ENCODE measurements at regions of chr1 and their contacts with region 1.

Region 1: DNA sequence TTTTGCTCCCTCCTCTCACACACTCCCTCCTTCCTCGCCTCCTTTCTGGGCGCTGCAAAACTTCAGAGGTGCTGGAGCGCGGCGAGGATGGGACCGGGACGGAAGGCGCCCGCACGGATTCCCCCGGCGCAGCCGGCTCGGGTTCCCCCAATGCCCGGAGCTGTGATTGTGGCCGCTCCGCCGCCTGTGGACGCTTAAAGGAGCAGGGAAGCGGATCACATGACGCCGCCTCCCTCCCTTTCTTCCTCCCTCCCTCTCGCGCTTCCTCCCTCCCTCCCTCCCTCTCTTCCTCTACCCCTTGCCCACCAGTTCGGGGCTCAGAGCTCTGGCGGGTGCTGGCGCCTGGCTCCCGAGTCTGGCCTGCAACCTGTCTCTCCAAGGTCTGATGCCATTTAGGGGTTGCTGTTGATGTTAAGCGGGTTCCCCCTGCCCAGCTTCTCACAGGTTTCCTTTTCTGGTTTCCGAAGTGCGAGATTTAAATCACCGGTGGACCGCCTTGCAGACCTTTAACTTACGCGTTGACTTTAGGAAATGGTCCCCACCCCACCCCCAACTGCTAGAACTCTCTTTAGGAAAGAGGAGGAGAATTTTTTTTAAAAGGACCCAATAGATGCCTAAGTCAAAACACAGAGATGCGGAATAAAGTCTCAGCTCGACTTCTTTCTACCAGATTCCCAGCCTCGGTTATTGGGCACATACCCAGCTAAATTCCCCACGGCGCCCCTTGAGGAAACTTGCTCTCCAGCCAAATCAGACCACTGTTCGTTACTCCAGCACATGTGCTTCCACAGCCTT is at the start of gene WLS:
- DNase-seq: peak; percentile 84
- ATAC-seq: peak; percentile 88
- H3K4me3 ChIP-seq: peak within 1 kb of the TSS; percentile 33
- H3K4me1 ChIP-seq: no peaks in the 10 kb centered on the region
- CTCF ChIP-seq: no peak
- total RNA-seq, gene WLS: 100 to 182 (median 118) TPM

Region 2: DNA sequence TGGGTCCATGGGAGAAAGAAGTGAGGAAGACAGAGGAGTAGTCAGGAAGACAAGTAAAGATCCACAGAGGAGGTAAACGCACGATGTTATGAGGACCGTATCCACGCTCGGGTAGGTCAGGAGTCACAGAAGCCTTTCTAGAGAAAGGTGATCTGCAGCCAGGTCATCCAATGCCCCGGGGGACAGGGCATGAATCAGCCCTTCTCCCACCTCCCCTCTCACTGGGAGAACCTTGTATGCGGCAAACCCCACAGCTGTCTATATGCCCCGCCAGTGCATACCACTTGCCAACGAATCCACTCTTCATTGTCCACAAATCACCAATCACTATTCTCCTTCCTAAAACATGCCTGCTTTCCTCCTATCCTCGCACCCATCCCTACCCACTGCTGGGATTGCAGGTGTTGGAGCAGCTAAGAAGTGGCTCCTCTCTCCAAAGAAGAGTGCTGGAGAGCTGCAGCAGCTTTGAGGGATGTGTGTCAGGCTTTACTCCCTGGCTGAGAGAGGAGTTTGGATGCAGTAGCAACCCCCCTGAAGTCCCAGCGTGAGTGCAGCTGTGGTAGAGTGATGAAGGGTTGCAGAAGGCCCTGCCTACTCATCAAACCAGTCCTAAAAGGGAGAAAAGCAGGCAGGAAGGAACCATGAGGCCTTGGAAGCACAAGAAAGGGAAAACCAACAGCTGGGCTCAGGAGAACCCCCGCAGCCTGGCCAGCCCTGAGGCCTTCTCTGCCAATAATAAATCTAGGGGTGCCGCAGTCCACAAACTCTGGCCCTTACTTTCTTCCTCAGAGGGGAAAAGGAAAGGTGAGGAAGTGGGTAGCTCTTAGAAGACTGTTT is 649.7 kb before region 1 on chr1:
- intact Hi-C with region 1: no loop called
- DNase-seq: no peak
- ATAC-seq: no peak
- H3K4me3 ChIP-seq: no peak overlapping the region
- H3K4me1 ChIP-seq: no peaks in the 10 kb centered on the region
- CTCF ChIP-seq: no peak

Region 3: GRCh38 chr1:68141071-68142021 is 91.2 kb before region 1 on chr1:
- intact Hi-C with region 1: loop called in 1 of 2 experiments (anchors 5 kb)
- DNase-seq: no peak
- ATAC-seq: no peak
- H3K4me3 ChIP-seq: no peak overlapping the region
- H3K4me1 ChIP-seq: peaks cover 3% of the 10 kb centered on the region
- CTCF ChIP-seq: no peak

Region 4: GRCh38 chr1:68321084-68321685 is 88.6 kb after region 1 on chr1:
- intact Hi-C with region 1: loop called in 1 of 2 experiments (anchors 10 kb)
- DNase-seq: peak; percentile 66 to 87 (median 84)
- ATAC-seq: peak; percentile 95
- H3K4me3 ChIP-seq: no peak overlapping the region
- H3K4me1 ChIP-seq: peaks cover 4% of the 10 kb centered on the region
- CTCF ChIP-seq: peak; percentile 52

Region 5: DNA sequence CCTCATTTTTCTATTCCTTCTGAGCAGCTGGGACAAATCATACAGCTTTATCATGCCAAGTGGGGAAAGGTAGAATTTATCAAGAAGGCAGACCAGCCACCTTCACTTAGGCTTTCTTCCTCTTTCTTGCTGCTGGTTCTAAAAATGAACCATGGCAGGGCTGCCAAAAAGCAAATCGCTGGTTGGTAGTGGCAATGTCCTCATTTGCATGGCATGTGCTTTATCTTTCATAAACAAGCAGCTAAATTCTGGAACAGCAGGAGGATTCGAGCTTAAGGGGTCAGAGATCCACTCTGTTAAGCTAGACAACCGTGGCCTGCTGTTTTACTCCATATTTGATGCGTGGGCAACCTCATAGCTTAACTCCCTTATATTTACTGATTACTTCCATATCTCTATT is 125.9 kb after region 1 on chr1:
- intact Hi-C with region 1: no loop called
- DNase-seq: no peak
- ATAC-seq: no peak
- H3K4me3 ChIP-seq: no peak overlapping the region
- H3K4me1 ChIP-seq: no peaks in the 10 kb centered on the region
- CTCF ChIP-seq: no peak

Measured in mucosa of descending colon (tissue), 3 donors.